Activated CD4-positive, alpha-beta memory T cell treated with anti-CD3 and anti-CD28 coated beads, Interleukin-2, amount 10 ng/mL, durations not matched to agents 7 days and 5 days (primary cell): ENCODE measurements at regions of chr16 and their contacts with region 1.

Region 1: GRCh38 chr16:30183233-30184095 is at the start of gene CORO1A:
- DNase-seq: peak; percentile 90
- H3K4me3 Mint-ChIP-seq: peak within 1 kb of the TSS; percentile 100
- H3K27ac Mint-ChIP-seq: peak within 1 kb of the TSS; percentile 99
- H3K4me1 Mint-ChIP-seq: peaks cover 29% of the 10 kb centered on the region
- H3K27me3 Mint-ChIP-seq: no peaks in the 10 kb centered on the region
- total RNA-seq, gene CORO1A: 1,737 to 1,754 TPM

Region 2: DNA sequence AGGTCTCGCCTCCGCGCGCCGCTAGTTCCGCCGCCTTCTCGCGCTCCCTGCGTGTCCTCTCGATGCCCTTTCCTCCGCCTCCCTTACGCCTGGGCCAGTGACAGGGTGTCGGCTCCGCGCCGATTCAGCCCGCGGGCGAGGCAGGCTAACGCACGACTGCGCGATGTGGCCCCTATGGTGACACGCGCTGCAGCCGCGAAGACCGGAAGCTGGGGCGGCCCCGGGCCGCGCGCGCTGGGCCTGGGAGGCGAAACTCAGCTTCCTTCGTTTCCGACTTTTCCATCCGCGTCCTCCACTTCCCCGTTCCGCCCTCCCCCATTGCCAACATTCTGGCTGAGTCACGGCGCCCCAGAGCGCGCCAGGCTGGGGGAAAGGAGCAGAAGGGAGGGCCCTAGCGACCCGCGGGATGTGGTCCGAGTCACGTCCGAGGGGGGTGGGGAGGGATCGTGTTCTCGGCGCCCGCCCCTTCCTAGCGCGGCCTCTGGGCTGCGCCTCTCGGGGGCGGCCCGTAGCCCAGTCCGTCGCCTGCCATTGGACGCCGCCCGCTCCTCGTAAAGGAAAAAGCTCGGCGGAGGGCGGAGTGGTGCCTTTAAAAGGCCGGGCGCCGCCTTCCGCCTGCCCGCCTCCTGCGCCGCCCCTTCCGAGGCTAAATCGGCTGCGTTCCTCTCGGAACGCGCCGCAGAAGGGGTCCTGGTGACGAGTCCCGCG is 118.2 kb before region 1 on chr16 and contains the start of gene ALDOA:
- CTCF ChIA-PET with region 1: interaction called, 4 read pairs
- POLR2A ChIA-PET with region 1: interaction called, 83 read pairs
- DNase-seq: peak; percentile 97
- H3K4me3 Mint-ChIP-seq: peak within 1 kb of the TSS; percentile 95
- H3K27ac Mint-ChIP-seq: peak within 1 kb of the TSS; percentile 99
- H3K4me1 Mint-ChIP-seq: peaks cover 36% of the 10 kb centered on the region
- H3K27me3 Mint-ChIP-seq: no peaks in the 10 kb centered on the region
- total RNA-seq, gene ALDOA: 1,403 to 1,450 TPM

Region 3: GRCh38 chr16:30091474-30092372 is 91.7 kb before region 1 on chr16 and contains the start of gene TBX6:
- CTCF ChIA-PET with region 1: interaction called, 17 read pairs
- POLR2A ChIA-PET with region 1: interaction called, 92 read pairs
- DNase-seq: peak; percentile 95
- H3K4me3 Mint-ChIP-seq: peak within 1 kb of the TSS; percentile 88
- H3K27ac Mint-ChIP-seq: peak within 1 kb of the TSS; percentile 96
- H3K4me1 Mint-ChIP-seq: peaks cover 63% of the 10 kb centered on the region
- H3K27me3 Mint-ChIP-seq: no peaks in the 10 kb centered on the region
- total RNA-seq, gene TBX6: 1.9 to 2.5 TPM

Region 4: GRCh38 chr16:30122604-30123160 is 60.8 kb before region 1 on chr16:
- CTCF ChIA-PET with region 1: interaction called, 3 read pairs
- POLR2A ChIA-PET with region 1: interaction called, 15 read pairs
- DNase-seq: peak; percentile 28
- H3K4me3 Mint-ChIP-seq: peak overlapping the region; percentile 88
- H3K27ac Mint-ChIP-seq: peak overlapping the region; percentile 82
- H3K4me1 Mint-ChIP-seq: peaks cover 39% of the 10 kb centered on the region
- H3K27me3 Mint-ChIP-seq: no peaks in the 10 kb centered on the region

Region 5: DNA sequence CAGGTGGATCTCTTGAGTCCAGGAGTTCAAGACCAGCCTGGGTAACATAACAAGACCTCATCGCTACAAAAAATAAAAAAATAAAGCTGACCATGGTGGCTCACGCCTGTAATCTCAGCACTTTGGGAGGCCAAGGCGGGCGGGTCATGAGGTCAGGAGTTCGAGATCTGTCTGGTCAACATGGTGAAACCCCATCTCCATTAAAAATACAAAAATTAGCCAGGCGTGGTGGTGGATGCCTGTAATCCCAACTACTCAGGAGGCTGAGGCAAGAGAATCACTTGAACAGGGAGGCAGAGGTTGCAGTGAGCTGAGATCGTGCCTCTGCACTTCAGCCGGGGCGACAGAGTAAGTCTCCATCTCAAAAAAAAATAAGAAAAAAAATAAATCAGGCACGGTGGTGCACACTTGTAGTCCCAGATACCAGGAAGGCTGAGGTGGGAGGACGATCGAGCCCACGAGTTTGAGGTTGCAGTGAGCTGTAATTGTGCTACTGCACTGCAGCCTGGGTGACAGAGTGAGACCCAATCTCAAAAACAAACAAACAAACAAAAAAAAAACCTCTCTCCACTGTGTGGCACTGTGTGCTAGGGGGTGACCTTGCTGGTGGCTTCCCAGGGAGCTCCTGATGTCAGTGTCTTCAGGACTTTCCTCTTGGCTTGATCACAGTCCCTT is 40.7 kb before region 1 on chr16:
- CTCF ChIA-PET with region 1: interaction called, 9 read pairs
- POLR2A ChIA-PET with region 1: interaction called, 33 read pairs
- DNase-seq: peak; percentile 36
- H3K4me3 Mint-ChIP-seq: no peak overlapping the region
- H3K27ac Mint-ChIP-seq: no peak overlapping the region
- H3K4me1 Mint-ChIP-seq: peaks cover 18% of the 10 kb centered on the region
- H3K27me3 Mint-ChIP-seq: no peaks in the 10 kb centered on the region

Region 6: GRCh38 chr16:30378236-30379204 is 195.1 kb after region 1 on chr16:
- CTCF ChIA-PET with region 1: no interaction called
- POLR2A ChIA-PET with region 1: interaction called, 16 read pairs
- DNase-seq: peak; percentile 100
- H3K4me3 Mint-ChIP-seq: peak overlapping the region; percentile 93
- H3K27ac Mint-ChIP-seq: peak overlapping the region; percentile 99
- H3K4me1 Mint-ChIP-seq: peaks cover 52% of the 10 kb centered on the region
- H3K27me3 Mint-ChIP-seq: no peaks in the 10 kb centered on the region

Region 7: GRCh38 chr16:30482366-30482765 is 298.9 kb after region 1 on chr16:
- CTCF ChIA-PET with region 1: no interaction called
- POLR2A ChIA-PET with region 1: no interaction called
- DNase-seq: peak; percentile 23
- H3K4me3 Mint-ChIP-seq: peak overlapping the region; percentile 4
- H3K27ac Mint-ChIP-seq: peak overlapping the region; percentile 78
- H3K4me1 Mint-ChIP-seq: peaks cover 63% of the 10 kb centered on the region
- H3K27me3 Mint-ChIP-seq: no peaks in the 10 kb centered on the region